HEK293 (cell line): ENCODE measurements at regions of chr11 and their contacts with region 1.

Region 1: DNA sequence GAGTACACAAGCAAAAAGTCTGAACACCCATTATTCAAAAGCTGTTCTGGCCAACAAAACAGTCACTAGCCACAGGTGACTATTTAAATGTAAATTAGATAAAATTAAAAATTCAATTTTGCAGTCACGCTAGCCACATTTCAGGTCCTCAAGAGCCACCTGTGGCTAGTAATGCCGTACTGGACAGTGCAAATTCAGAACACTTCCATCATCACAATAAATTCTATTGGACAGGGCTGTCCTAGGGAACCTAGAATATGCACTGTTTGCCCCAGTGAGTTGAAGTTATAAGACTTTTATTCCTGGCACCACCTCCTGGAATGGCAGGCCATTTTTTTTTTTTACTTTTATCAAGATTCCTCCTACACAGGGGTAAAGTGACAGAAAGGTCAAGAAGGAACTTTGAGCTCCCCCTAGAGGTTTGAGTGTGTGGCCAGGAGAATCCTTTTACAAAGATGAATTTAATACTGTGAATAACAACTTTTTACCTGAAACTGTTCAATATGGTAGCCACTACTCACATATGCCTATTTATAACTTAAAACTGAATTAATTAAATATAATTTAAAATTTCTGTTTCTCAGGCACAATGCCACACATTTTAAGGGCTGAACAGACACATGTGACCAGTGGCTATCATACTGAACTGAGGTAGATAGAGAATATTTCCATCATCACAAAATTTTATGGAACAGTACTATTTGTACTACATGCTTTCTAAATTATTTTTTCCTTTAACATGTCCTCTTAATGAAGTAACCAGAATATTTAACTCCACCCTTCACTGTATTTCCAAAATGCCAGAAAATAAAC is 6.5 kb downstream of the MSANTD2 start:
- H3K4me3 ChIP-seq: no peak overlapping the region
- H3K27ac ChIP-seq: no peak overlapping the region
- H3K4me1 ChIP-seq: peaks cover 8% of the 10 kb centered on the region
- CTCF ChIP-seq: no peak

Region 2: GRCh38 chr11:124758317-124759203 is 35.1 kb before region 1 on chr11:
- CTCF ChIA-PET with region 1: interaction called, 42 read pairs
- POLR2A ChIA-PET with region 1: interaction called, 13 read pairs
- H3K4me3 ChIP-seq: no peak overlapping the region
- H3K27ac ChIP-seq: no peak overlapping the region
- H3K4me1 ChIP-seq: no peaks in the 10 kb centered on the region
- CTCF ChIP-seq: no peak

Region 3: GRCh38 chr11:124778281-124778680 is 15.4 kb before region 1 on chr11:
- CTCF ChIA-PET with region 1: interaction called, 20 read pairs
- POLR2A ChIA-PET with region 1: no interaction called
- H3K4me3 ChIP-seq: no peak overlapping the region
- H3K27ac ChIP-seq: no peak overlapping the region
- H3K4me1 ChIP-seq: no peaks in the 10 kb centered on the region
- CTCF ChIP-seq: no peak

Region 4: GRCh38 chr11:124837491-124837856 is 43.8 kb after region 1 on chr11:
- CTCF ChIA-PET with region 1: interaction called, 19 read pairs
- POLR2A ChIA-PET with region 1: no interaction called
- H3K4me3 ChIP-seq: no peak overlapping the region
- H3K27ac ChIP-seq: no peak overlapping the region
- H3K4me1 ChIP-seq: no peaks in the 10 kb centered on the region
- CTCF ChIP-seq: 0 out of 2 replicates have a peak, but pooled peaks have one; percentile 54